Dorsolateral prefrontal cortex (tissue), 120 donors: ENCODE measurements at regions of chr16 and their contacts with region 1.

Region 1: GRCh38 chr16:6331770-6332169 is 1000.9 kb upstream of the RBFOX1 start:
- DNase-seq: no peak
- H3K4me3 ChIP-seq: no peak overlapping the region
- H3K27ac ChIP-seq: no peak overlapping the region
- H3K27me3 ChIP-seq: no peaks in the 10 kb centered on the region
- CTCF ChIP-seq: no peak

Region 2: GRCh38 chr16:6345090-6345489 is 13.3 kb after region 1 on chr16:
- intact Hi-C with region 1: loop called in 1 of 2 experiments (anchors 2 kb)
- DNase-seq: no peak
- H3K4me3 ChIP-seq: no peak overlapping the region
- H3K27ac ChIP-seq: no peak overlapping the region
- H3K27me3 ChIP-seq: peaks cover 0 to 4% (median 0%) of the 10 kb centered on the region in 45 donors
- CTCF ChIP-seq: peak in 2 of 56 donors; percentile 10